Sigmoid colon (tissue), 7 donors: ENCODE measurements at regions of chr15 and their contacts with region 1.

Region 1: GRCh38 chr15:97791824-97792792 is 168.4 kb upstream of the ARRDC4 start:
- DNase-seq: peak; percentile 84
- H3K4me3 ChIP-seq: peak overlapping the region in 2 of 4 donors; percentile 13 to 24
- H3K27ac ChIP-seq: peak overlapping the region; percentile 72 to 84 (median 77)
- H3K4me1 ChIP-seq: peaks cover 0 to 34% (median 22%) of the 10 kb centered on the region in 4 donors
- H3K27me3 ChIP-seq: no peaks in the 10 kb centered on the region
- CTCF ChIP-seq: no peak
- EP300 ChIP-seq: peak in 2 of 4 donors; percentile 2 to 16
- POLR2A ChIP-seq: no peak

Region 2: GRCh38 chr15:97501291-97501690 is 290.8 kb before region 1 on chr15:
- intact Hi-C with region 1: no loop called
- DNase-seq: no peak
- H3K4me3 ChIP-seq: no peak overlapping the region
- H3K27ac ChIP-seq: no peak overlapping the region
- H3K4me1 ChIP-seq: no peaks in the 10 kb centered on the region
- H3K27me3 ChIP-seq: no peaks in the 10 kb centered on the region
- CTCF ChIP-seq: no peak
- EP300 ChIP-seq: no peak
- POLR2A ChIP-seq: no peak

Region 3: DNA sequence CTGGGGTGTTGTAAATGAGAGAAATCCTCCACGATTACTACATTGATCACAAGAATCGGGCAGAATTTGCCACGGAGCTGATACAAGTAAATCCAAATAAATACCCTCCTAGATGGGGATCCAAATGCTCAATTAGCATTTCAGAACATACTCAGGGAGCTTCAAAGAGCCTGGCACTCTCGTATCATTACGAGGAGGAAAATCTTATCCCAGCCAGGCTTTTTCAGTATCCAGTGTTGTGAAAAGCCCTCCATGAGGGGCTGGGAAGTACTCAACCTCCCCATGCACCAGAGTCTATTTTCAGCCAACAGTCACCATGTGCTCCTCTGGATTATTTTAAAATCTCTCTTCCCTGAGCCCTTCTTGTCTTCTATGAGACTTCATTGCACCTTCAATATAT is 45.8 kb after region 1 on chr15:
- intact Hi-C with region 1: no loop called
- DNase-seq: no peak
- H3K4me3 ChIP-seq: no peak overlapping the region
- H3K27ac ChIP-seq: no peak overlapping the region
- H3K4me1 ChIP-seq: peaks cover 0 to 11% (median 7%) of the 10 kb centered on the region in 4 donors
- H3K27me3 ChIP-seq: no peaks in the 10 kb centered on the region
- CTCF ChIP-seq: no peak
- EP300 ChIP-seq: no peak
- POLR2A ChIP-seq: no peak

Region 4: GRCh38 chr15:97884513-97885131 is 92.5 kb after region 1 on chr15:
- intact Hi-C with region 1: loop called (anchors 5 kb)
- DNase-seq: no peak
- H3K4me3 ChIP-seq: no peak overlapping the region
- H3K27ac ChIP-seq: no peak overlapping the region
- H3K4me1 ChIP-seq: peaks cover 0 to 1% (median 0%) of the 10 kb centered on the region in 4 donors
- H3K27me3 ChIP-seq: no peaks in the 10 kb centered on the region
- CTCF ChIP-seq: no peak
- EP300 ChIP-seq: no peak
- POLR2A ChIP-seq: no peak

Region 5: GRCh38 chr15:97960364-97961066 is 168.4 kb after region 1 on chr15 and contains the start of gene ARRDC4:
- intact Hi-C with region 1: loop called (anchors 5 kb)
- DNase-seq: peak; percentile 100
- H3K4me3 ChIP-seq: peak within 1 kb of the TSS; percentile 71 to 91 (median 84)
- H3K27ac ChIP-seq: peak within 1 kb of the TSS; percentile 94 to 98 (median 98)
- H3K4me1 ChIP-seq: peaks cover 0 to 40% (median 36%) of the 10 kb centered on the region in 4 donors
- H3K27me3 ChIP-seq: no peaks in the 10 kb centered on the region
- CTCF ChIP-seq: no peak
- EP300 ChIP-seq: peak in 1 of 4 donors; percentile 33
- POLR2A ChIP-seq: peak; percentile 72 to 82
- total RNA-seq, gene ARRDC4: 116 to 205 (median 170) TPM

Region 6: DNA sequence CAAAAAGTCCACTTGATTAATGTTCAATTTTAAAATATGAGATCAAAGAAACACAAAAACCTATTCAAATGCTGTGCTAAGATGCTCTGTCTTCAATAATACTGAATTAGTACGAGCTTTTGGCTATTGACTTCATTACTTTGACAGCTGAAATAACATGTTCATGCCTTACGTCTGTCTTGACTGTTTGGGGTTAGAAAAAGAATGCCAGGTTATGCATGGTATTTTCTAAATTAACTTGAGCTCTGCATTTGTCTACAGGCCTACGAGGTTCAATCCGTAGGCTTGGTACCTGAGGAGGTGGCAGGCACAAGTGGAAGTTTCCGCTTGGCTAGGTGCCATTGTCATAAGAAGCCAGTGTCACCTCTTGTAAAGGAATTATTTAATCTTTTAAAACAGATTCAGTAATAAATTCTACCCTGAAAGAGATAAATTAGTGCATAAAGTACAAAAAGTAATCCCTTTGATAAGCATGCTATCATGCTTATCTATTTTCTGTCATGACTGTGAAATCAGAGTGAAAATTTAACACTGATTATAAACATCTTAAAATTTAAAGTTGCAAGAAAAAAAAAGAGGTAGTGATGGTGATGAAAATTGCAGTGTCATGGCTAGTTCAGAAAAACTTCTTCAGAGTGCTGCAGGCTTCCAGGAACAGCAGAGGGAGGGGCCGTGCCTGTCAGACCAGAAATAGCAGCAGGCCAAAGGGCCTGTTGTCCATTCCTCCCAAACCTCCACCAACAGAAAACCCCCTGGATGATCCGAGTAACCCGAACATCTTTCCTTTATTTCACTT is 284.1 kb after region 1 on chr15:
- intact Hi-C with region 1: loop called (anchors 10 kb)
- DNase-seq: peak; percentile 78
- H3K4me3 ChIP-seq: no peak overlapping the region
- H3K27ac ChIP-seq: peak overlapping the region; percentile 72 to 80 (median 76)
- H3K4me1 ChIP-seq: peaks cover 0 to 27% (median 23%) of the 10 kb centered on the region in 4 donors
- H3K27me3 ChIP-seq: no peaks in the 10 kb centered on the region
- CTCF ChIP-seq: no peak
- EP300 ChIP-seq: no peak
- POLR2A ChIP-seq: no peak